Mammary epithelial cell (primary cell): ENCODE measurements at regions of chrX and their contacts with region 1.

Region 1: DNA sequence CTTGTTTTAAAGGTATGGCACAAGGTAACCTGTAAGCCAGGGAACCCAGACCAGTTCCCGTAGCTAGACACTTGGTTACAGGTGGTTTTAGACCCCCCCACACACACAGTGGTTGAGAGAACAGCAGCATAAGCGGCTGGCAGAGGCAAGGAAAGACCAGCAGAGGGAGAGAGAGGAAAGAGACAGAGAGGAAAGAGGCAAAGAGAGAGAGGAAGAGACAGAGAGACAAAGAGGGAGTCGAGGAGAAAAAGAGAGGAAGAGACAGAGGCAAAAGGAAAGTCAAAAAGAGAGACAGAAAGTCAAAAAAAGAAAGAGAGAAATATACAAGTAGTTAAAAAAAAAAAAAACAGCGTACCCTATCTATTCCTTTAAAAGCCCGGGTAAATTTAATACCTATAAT is 19.5 kb upstream of the PCSK1N start:
- DNase-seq: peak; percentile 18
- H3K4me3 ChIP-seq: no peak overlapping the region
- H3K27ac ChIP-seq: no peak overlapping the region
- H3K4me1 ChIP-seq: no peaks in the 10 kb centered on the region
- H3K27me3 ChIP-seq: no peaks in the 10 kb centered on the region
- CTCF ChIP-seq: peak in 1 of 2 donors; percentile 55

Region 2: DNA sequence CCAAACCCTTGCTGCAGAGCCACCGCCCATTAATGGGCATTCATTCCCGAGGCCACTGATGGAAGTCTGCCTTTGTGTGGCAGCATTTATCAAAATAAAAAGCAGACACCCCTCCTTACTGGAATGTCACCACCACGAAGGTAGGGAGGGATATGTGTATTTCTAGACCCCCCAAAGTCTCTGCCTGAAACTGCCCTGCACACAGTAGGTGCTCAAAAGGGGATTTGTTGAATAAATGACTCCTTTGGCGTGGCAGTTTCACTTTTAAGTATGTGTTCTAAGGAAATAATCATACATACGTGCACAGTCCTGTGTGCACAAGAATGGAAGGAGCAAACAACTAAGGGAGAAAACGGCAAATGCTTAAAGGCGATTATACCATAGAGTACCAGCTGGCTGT is 117.0 kb before region 1 on chrX:
- CTCF ChIA-PET with region 1: no interaction called
- dilution Hi-C with region 1: no loop called
- in situ Hi-C with region 1: no loop called
- intact Hi-C with region 1: no loop called
- DNase-seq: no peak
- H3K4me3 ChIP-seq: peak overlapping the region; percentile 53 to 61 (median 60)
- H3K27ac ChIP-seq: peak overlapping the region; percentile 63
- H3K4me1 ChIP-seq: peaks cover 7% of the 10 kb centered on the region
- H3K27me3 ChIP-seq: no peaks in the 10 kb centered on the region
- CTCF ChIP-seq: no peak

Region 3: DNA sequence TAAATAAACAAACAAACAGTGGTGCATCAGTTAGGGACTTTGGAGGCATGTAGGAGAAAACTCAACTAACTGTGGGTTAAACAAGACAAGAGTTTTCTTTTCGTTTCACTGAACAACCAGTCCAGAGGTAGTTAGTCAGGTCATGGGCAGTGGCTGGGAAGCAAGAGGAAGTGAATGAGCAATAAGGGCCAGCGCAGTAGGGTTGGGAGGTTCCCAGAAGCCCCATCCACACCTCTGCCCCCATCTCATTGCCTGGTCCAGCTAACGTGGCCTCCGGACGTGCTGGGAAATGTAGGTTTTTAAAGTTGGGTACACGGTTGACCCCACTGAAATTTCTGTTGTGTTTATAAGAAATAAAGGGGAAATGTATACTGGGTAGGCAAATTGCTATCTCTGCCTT is 84.6 kb before region 1 on chrX:
- CTCF ChIA-PET with region 1: no interaction called
- dilution Hi-C with region 1: no loop called
- in situ Hi-C with region 1: no loop called
- intact Hi-C with region 1: no loop called
- DNase-seq: no peak
- H3K4me3 ChIP-seq: no peak overlapping the region
- H3K27ac ChIP-seq: no peak overlapping the region
- H3K4me1 ChIP-seq: no peaks in the 10 kb centered on the region
- H3K27me3 ChIP-seq: no peaks in the 10 kb centered on the region
- CTCF ChIP-seq: no peak

Region 4: GRCh38 chrX:48891402-48892288 is 36.7 kb after region 1 on chrX:
- CTCF ChIA-PET with region 1: no interaction called
- dilution Hi-C with region 1: no loop called
- in situ Hi-C with region 1: no loop called
- intact Hi-C with region 1: loop called (anchors 1 kb)
- DNase-seq: peak; percentile 85
- H3K4me3 ChIP-seq: peak overlapping the region; percentile 48 to 51 (median 49)
- H3K27ac ChIP-seq: no peak overlapping the region
- H3K4me1 ChIP-seq: peaks cover 4% of the 10 kb centered on the region
- H3K27me3 ChIP-seq: no peaks in the 10 kb centered on the region
- CTCF ChIP-seq: peak; percentile 24 to 55

Region 5: GRCh38 chrX:48897621-48898306 is 42.9 kb after region 1 on chrX and contains the starts of genes PQBP1 and TIMM17B:
- CTCF ChIA-PET with region 1: no interaction called
- dilution Hi-C with region 1: no loop called
- in situ Hi-C with region 1: no loop called
- intact Hi-C with region 1: loop called (anchors 1 kb)
- DNase-seq: peak; percentile 94
- H3K4me3 ChIP-seq: peak within 1 kb of the TSS; percentile 26 to 77 (median 59)
- H3K27ac ChIP-seq: peak within 1 kb of the TSS; percentile 78
- H3K4me1 ChIP-seq: no peaks in the 10 kb centered on the region
- H3K27me3 ChIP-seq: no peaks in the 10 kb centered on the region
- CTCF ChIP-seq: no peak
- total RNA-seq, gene PQBP1: 31.2 to 69.5 TPM
- total RNA-seq, gene TIMM17B: 28.0 to 53.2 TPM

Region 6: GRCh38 chrX:48917139-48918001 is 62.5 kb after region 1 on chrX:
- CTCF ChIA-PET with region 1: no interaction called
- dilution Hi-C with region 1: no loop called
- in situ Hi-C with region 1: no loop called
- intact Hi-C with region 1: loop called (anchors 1 kb)
- DNase-seq: peak; percentile 82
- H3K4me3 ChIP-seq: peak overlapping the region; percentile 8 to 70 (median 66)
- H3K27ac ChIP-seq: peak overlapping the region; percentile 56
- H3K4me1 ChIP-seq: peaks cover 5% of the 10 kb centered on the region
- H3K27me3 ChIP-seq: no peaks in the 10 kb centered on the region
- CTCF ChIP-seq: peak; percentile 88 to 89

Region 7: DNA sequence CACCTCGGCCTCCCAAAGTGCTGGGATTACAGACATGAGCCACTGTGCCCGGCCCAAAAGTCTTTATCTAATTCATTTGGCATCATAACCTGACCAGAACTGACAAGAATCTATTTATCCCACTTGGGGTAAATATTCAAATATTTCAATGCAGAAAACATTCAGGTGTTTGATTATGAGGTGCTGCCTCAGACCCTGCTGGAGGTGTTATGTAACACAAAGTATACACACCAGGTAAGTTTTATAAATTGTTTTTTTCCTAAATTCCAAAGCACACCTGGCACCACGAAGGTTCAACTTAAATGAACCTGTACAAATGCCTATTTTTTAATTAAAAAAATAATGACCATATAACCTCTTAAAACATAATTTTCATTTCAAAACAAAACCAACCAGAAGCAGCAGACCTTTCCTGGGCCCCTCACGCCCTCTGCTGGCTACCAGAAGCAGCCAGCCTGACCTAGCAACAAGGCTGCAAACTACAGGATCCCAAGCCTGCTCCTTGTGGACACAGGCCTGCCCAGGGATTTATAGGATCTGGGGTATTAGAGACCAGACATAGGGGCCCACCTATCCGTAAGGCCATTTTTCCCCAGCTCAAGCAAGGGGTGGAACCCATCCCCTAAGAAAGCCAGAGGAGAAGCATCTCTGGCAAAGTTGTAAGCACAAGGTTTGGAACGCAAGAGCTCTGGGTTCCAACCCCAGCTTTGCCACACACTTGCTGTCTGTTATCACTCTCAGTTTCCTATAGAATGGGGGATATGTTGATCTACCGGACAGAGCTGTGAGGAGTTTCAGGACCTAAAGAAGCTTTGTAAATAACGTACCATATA is 90.8 kb after region 1 on chrX:
- CTCF ChIA-PET with region 1: no interaction called
- dilution Hi-C with region 1: no loop called
- in situ Hi-C with region 1: no loop called
- intact Hi-C with region 1: loop called (anchors 1 kb)
- DNase-seq: peak; percentile 27
- H3K4me3 ChIP-seq: no peak overlapping the region
- H3K27ac ChIP-seq: no peak overlapping the region
- H3K4me1 ChIP-seq: no peaks in the 10 kb centered on the region
- H3K27me3 ChIP-seq: no peaks in the 10 kb centered on the region
- CTCF ChIP-seq: peak; percentile 69 to 76

Region 8: DNA sequence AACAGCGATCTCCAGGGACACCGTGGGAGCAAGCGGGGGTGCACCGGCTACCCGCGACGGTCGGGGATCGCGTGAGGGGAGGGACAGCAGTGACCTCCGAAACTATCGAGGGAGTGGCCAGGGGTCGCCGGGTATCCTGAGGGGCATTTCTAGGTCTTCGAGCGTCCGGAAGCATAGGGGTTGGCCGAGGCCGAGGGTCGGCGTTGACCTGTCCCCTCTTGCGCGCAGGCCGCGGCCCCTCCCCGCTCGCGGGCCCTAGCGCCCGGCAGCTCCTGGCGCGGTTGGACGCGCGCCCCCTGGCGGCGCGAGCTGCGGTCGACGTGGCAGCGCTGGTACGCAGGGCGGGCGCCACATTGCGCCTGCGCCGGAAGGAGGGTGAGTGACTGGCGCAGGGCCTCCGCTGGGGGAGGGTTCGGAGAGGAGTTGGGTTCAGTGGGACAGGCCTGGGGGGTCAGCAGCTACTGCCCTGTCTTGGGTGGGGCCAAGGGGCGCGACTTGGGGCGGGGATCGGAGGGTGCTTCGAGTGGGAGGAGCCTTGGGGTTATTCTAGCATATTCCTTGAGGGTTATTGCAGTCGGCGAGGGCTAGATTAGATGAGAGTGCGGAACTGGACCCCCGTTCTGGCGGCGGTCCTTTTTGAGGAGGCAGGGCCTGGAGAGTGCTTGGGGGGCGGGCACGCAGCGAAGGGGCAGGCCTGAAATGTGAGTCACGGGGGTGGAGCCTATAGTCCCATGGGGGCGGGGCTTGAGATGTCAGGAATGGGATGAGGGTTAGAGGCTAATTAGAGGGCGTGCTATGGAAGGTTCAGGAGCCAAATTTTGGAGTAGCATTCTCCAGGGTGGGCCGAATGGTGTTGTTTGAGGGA is 308.9 kb after region 1 on chrX:
- CTCF ChIA-PET with region 1: no interaction called
- dilution Hi-C with region 1: no loop called
- in situ Hi-C with region 1: no loop called
- intact Hi-C with region 1: no loop called
- DNase-seq: peak; percentile 73
- H3K4me3 ChIP-seq: peak overlapping the region; percentile 7 to 52 (median 17)
- H3K27ac ChIP-seq: no peak overlapping the region
- H3K4me1 ChIP-seq: peaks cover 7% of the 10 kb centered on the region
- H3K27me3 ChIP-seq: no peaks in the 10 kb centered on the region
- CTCF ChIP-seq: peak; percentile 30 to 51